ENCODE measurements at regions of chr1 and their contacts with region 1.

Region 1: DNA sequence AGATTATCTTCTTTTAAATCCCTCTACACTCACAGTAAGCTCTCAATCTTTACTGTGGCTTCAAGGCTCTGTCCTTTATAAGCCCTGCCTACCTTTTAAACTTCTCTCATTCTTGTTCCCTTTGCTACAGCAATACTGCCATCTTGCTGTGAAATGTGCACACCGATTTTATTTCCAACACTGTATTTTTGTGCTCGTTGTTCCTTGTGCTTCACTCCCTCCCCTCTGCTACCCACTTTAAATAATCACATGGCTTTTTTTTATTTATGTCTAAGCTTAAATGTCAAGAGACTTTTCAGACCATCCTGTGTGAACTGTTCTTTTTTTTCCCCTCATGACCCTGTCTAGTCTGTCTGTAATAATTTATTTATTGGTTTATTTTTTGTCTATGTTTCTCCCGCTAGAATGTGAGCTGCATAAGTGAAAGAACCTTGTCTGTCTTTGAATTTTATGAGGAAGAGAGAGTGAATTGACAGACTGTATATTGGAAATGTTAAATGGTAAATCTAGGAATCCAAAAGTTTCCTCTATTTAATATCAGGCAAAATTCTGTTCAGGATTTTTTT is 45.7 kb downstream of the ABCD3 start:
- DNase-seq: peak; percentile 31
- ATAC-seq: no peak
- H3K4me3 ChIP-seq: no peak overlapping the region
- H3K4me3 Mint-ChIP-seq: no peak overlapping the region
- H3K27ac ChIP-seq: no peak overlapping the region
- H3K27ac Mint-ChIP-seq: no peak overlapping the region
- H3K4me1 ChIP-seq: no peaks in the 10 kb centered on the region
- H3K4me1 Mint-ChIP-seq: peaks cover 3% of the 10 kb centered on the region
- H3K27me3 ChIP-seq: no peaks in the 10 kb centered on the region
- H3K27me3 Mint-ChIP-seq: no peaks in the 10 kb centered on the region
- CTCF ChIP-seq: peak; percentile 65

Region 2: DNA sequence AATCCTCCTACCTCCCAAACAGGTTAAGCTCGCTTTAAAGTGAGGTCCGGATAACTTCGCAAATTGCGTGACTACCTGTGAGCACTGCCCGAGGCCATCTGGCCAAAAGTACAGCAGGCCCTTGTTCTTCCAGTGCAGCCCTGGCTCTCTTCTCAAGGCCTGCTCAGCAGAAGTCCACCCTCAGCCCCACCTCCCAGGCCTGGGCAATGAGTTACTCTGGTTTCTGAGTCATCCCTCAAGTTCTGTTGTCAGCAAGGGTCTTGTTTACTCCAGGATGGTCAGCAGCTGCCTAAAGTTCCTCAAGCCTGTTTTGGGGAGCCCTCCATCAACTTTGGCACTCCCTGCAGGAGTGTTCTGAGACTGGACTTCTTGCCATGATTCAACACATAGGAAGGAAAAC is 884.0 kb before region 1 on chr1:
- CTCF ChIA-PET with region 1: no interaction called
- POLR2A ChIA-PET with region 1: no interaction called
- intact Hi-C with region 1: no loop called
- DNase-seq: no peak
- ATAC-seq: no peak
- H3K4me3 ChIP-seq: no peak overlapping the region
- H3K4me3 Mint-ChIP-seq: no peak overlapping the region
- H3K27ac ChIP-seq: no peak overlapping the region
- H3K27ac Mint-ChIP-seq: no peak overlapping the region
- H3K4me1 ChIP-seq: no peaks in the 10 kb centered on the region
- H3K4me1 Mint-ChIP-seq: no peaks in the 10 kb centered on the region
- H3K27me3 ChIP-seq: no peaks in the 10 kb centered on the region
- H3K27me3 Mint-ChIP-seq: no peaks in the 10 kb centered on the region
- CTCF ChIP-seq: no peak

Region 3: GRCh38 chr1:94025383-94026340 is 438.2 kb before region 1 on chr1:
- CTCF ChIA-PET with region 1: interaction called, 21 read pairs
- POLR2A ChIA-PET with region 1: no interaction called
- intact Hi-C with region 1: loop called (anchors 5 kb)
- DNase-seq: peak; percentile 26
- ATAC-seq: no peak
- H3K4me3 ChIP-seq: no peak overlapping the region
- H3K4me3 Mint-ChIP-seq: no peak overlapping the region
- H3K27ac ChIP-seq: no peak overlapping the region
- H3K27ac Mint-ChIP-seq: no peak overlapping the region
- H3K4me1 ChIP-seq: no peaks in the 10 kb centered on the region
- H3K4me1 Mint-ChIP-seq: no peaks in the 10 kb centered on the region
- H3K27me3 ChIP-seq: peaks cover 0 to 3% (median 0%) of the 10 kb centered on the region in 4 experiments
- H3K27me3 Mint-ChIP-seq: peaks cover 17% of the 10 kb centered on the region
- CTCF ChIP-seq: peak; percentile 61

Region 4: GRCh38 chr1:94039514-94039870 is 424.4 kb before region 1 on chr1:
- CTCF ChIA-PET with region 1: interaction called, 47 read pairs
- POLR2A ChIA-PET with region 1: no interaction called
- intact Hi-C with region 1: no loop called
- DNase-seq: peak; percentile 51
- ATAC-seq: no peak
- H3K4me3 ChIP-seq: no peak overlapping the region
- H3K4me3 Mint-ChIP-seq: no peak overlapping the region
- H3K27ac ChIP-seq: no peak overlapping the region
- H3K27ac Mint-ChIP-seq: no peak overlapping the region
- H3K4me1 ChIP-seq: no peaks in the 10 kb centered on the region
- H3K4me1 Mint-ChIP-seq: peaks cover 3% of the 10 kb centered on the region
- H3K27me3 ChIP-seq: peaks cover 0 to 18% (median 4%) of the 10 kb centered on the region in 4 experiments
- H3K27me3 Mint-ChIP-seq: peaks cover 46% of the 10 kb centered on the region
- CTCF ChIP-seq: peak; percentile 79

Region 5: GRCh38 chr1:94045465-94046056 is 418.3 kb before region 1 on chr1:
- CTCF ChIA-PET with region 1: interaction called, 47 read pairs
- POLR2A ChIA-PET with region 1: no interaction called
- intact Hi-C with region 1: no loop called
- DNase-seq: peak; percentile 30
- ATAC-seq: no peak
- H3K4me3 ChIP-seq: peak overlapping the region in 1 of 5 experiments; percentile 7
- H3K4me3 Mint-ChIP-seq: peak overlapping the region; percentile 37
- H3K27ac ChIP-seq: no peak overlapping the region
- H3K27ac Mint-ChIP-seq: no peak overlapping the region
- H3K4me1 ChIP-seq: no peaks in the 10 kb centered on the region
- H3K4me1 Mint-ChIP-seq: peaks cover 7% of the 10 kb centered on the region
- H3K27me3 ChIP-seq: peaks cover 0 to 23% (median 2%) of the 10 kb centered on the region in 4 experiments
- H3K27me3 Mint-ChIP-seq: peaks cover 20% of the 10 kb centered on the region
- CTCF ChIP-seq: no peak

Region 6: GRCh38 chr1:94061513-94062443 is 402.1 kb before region 1 on chr1:
- CTCF ChIA-PET with region 1: interaction called, 36 read pairs
- POLR2A ChIA-PET with region 1: no interaction called
- intact Hi-C with region 1: no loop called
- DNase-seq: peak; percentile 32
- ATAC-seq: no peak
- H3K4me3 ChIP-seq: no peak overlapping the region
- H3K4me3 Mint-ChIP-seq: no peak overlapping the region
- H3K27ac ChIP-seq: no peak overlapping the region
- H3K27ac Mint-ChIP-seq: no peak overlapping the region
- H3K4me1 ChIP-seq: no peaks in the 10 kb centered on the region
- H3K4me1 Mint-ChIP-seq: no peaks in the 10 kb centered on the region
- H3K27me3 ChIP-seq: peaks cover 0 to 2% (median 0%) of the 10 kb centered on the region in 4 experiments
- H3K27me3 Mint-ChIP-seq: peaks cover 34% of the 10 kb centered on the region
- CTCF ChIP-seq: peak; percentile 49